Activated naive CD4-positive, alpha-beta T cell treated with anti-CD3 and anti-CD28 coated beads for 36 hours (primary cell): ENCODE measurements at regions of chr15 and their contacts with region 1.

Region 1: GRCh38 chr15:31365655-31366127 is 39.1 kb downstream of the KLF13 start:
- DNase-seq: peak; percentile 88
- H3K4me3 Mint-ChIP-seq: peak overlapping the region; percentile 74
- H3K27ac Mint-ChIP-seq: peak overlapping the region; percentile 99
- H3K4me1 Mint-ChIP-seq: peaks cover 97% of the 10 kb centered on the region
- H3K27me3 Mint-ChIP-seq: no peaks in the 10 kb centered on the region

Region 2: DNA sequence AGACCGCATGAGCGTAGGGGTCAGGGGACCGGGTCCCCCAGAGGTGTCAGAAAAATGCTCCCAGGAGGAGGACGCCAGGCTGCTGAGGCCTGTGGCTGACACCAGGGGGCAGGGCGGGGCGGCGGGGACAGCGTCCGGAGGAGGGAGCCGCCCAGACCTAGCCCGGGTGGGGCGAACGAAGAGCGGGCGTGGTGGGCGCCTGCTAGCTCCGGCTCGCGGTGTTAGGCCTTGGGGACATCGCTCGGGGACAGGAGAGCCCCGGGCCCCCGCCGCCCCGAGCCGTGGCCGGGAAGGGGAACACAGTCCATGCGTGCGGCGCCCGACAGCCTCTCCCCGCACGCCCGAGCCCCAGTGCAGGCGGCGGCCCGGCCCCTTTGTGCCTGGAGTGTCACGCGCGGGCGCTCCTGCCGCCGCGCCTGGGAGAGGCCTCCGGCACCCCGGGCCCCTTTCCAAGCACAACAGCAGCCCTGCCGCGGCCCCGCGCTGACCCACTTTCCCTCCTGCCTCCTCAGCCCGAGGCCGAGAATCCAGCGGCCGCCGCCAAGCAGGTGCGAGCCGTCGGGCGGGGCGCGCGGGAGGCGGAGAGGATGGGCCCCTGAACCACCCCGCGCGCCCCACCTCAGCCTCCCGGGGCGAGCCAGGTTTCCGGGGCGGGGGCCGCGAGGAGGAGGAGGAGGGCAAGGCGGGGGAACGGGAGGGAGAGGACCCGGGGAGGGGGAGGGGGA is 150.0 kb before region 1 on chr15:
- CTCF ChIA-PET with region 1: interaction called, 6 read pairs
- intact Hi-C with region 1: loop called (anchors 1 kb)
- DNase-seq: peak; percentile 86
- H3K4me3 Mint-ChIP-seq: peak overlapping the region; percentile 62
- H3K27ac Mint-ChIP-seq: peak overlapping the region; percentile 66
- H3K4me1 Mint-ChIP-seq: peaks cover 9% of the 10 kb centered on the region
- H3K27me3 Mint-ChIP-seq: no peaks in the 10 kb centered on the region

Region 3: DNA sequence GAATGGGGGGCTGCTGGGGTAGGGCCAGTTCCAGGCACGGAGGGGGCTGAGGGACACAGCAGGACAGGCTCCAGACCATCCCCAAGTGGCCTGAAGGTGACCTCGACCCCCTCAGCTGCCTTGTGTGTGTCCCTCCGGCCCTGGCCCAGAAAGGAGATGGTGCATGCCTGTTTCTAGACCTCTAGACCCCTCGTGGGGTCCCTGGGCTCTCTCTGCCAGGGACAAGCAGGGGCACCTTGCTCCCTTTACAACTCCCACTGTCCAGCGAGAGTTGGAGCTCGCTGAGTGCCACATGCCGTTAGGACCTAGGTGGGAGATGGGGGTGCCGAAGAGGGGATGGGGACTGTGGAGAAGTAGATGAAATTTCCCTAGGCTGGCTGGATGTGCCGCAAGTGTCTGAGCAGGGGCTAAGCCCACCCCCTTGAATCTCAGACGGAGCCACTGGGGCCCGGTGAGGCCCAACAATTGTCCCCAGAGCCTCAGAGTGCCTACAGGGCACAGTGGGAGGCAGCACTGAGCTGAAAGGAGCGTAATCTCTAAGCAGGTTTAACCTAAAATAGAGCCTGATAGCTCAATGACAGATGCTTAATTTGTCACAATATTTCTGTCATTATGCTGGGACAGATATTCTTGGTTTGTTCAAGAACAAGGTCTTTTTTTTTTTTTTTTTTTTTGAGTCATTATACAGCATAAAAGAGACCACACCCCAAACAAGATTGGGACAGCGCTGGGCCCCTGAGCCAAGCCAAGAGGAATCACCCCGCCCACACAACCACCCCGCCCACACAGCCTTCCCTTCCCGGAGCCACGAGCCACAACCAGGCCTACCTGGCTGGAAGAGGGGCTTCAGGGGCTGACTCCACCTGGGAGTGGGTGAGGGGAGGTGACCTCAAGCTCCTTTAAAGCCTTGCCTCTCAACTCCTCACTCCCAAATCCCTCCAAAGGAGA is 62.6 kb before region 1 on chr15:
- CTCF ChIA-PET with region 1: no interaction called
- intact Hi-C with region 1: loop called (anchors 2 kb)
- DNase-seq: peak; percentile 46
- H3K4me3 Mint-ChIP-seq: no peak overlapping the region
- H3K27ac Mint-ChIP-seq: no peak overlapping the region
- H3K4me1 Mint-ChIP-seq: peaks cover 27% of the 10 kb centered on the region
- H3K27me3 Mint-ChIP-seq: no peaks in the 10 kb centered on the region

Region 4: DNA sequence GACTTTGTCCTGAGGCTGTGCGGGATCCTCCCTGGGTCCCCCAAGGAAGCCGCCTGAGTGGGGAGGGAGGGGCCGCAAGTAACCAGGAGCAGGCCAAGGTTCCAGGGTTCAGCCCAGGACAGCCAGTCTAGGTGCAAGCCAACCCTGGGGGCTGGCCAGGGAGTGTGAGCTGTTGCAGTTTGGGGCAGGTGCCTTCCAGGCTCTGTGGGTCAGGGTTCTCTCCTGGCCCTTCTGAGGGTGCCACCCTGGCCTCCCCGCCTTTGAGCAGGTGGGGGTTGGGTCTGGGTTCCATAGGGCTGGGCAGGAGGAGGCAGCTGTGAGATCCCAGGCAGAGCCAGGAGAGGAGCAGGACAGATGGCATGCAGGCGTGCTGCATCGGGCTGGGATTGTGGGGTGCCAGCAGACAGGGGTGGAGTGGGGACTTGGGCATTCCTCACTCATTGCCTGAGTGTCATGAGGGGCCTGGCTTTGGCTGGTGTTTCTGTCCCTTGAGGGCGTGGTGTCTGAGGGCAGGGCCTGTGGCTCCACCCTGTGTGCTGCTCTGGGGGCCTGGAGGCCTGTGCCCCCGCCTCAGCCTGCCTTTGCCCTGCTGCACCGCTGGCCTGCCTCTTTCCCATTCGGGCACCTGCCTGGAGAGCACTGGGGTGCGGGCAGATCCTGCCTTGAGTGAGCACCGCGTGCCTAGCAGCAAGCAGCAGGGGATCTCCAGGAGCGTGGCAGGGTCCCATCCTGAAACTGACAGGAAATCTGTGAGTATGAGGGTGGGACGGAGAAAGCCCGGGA is 20.7 kb before region 1 on chr15:
- CTCF ChIA-PET with region 1: interaction called, 21 read pairs
- intact Hi-C with region 1: loop called (anchors 1 kb)
- DNase-seq: peak; percentile 66
- H3K4me3 Mint-ChIP-seq: peak overlapping the region; percentile 92
- H3K27ac Mint-ChIP-seq: peak overlapping the region; percentile 99
- H3K4me1 Mint-ChIP-seq: peaks cover 98% of the 10 kb centered on the region
- H3K27me3 Mint-ChIP-seq: no peaks in the 10 kb centered on the region

Region 5: GRCh38 chr15:31391687-31392671 is 26.3 kb after region 1 on chr15:
- CTCF ChIA-PET with region 1: interaction called, 6 read pairs
- intact Hi-C with region 1: loop called (anchors 1 kb)
- DNase-seq: peak; percentile 85
- H3K4me3 Mint-ChIP-seq: peak overlapping the region; percentile 89
- H3K27ac Mint-ChIP-seq: no peak overlapping the region
- H3K4me1 Mint-ChIP-seq: peaks cover 29% of the 10 kb centered on the region
- H3K27me3 Mint-ChIP-seq: peaks cover 2% of the 10 kb centered on the region

Region 6: GRCh38 chr15:31752065-31752762 is 386.5 kb after region 1 on chr15:
- CTCF ChIA-PET with region 1: no interaction called
- intact Hi-C with region 1: no loop called
- DNase-seq: no peak
- H3K4me3 Mint-ChIP-seq: no peak overlapping the region
- H3K27ac Mint-ChIP-seq: no peak overlapping the region
- H3K4me1 Mint-ChIP-seq: no peaks in the 10 kb centered on the region
- H3K27me3 Mint-ChIP-seq: peaks cover 10% of the 10 kb centered on the region